Gastrocnemius medialis (tissue), 4 donors: ENCODE measurements at regions of chr13 and their contacts with region 1.

Region 1: DNA sequence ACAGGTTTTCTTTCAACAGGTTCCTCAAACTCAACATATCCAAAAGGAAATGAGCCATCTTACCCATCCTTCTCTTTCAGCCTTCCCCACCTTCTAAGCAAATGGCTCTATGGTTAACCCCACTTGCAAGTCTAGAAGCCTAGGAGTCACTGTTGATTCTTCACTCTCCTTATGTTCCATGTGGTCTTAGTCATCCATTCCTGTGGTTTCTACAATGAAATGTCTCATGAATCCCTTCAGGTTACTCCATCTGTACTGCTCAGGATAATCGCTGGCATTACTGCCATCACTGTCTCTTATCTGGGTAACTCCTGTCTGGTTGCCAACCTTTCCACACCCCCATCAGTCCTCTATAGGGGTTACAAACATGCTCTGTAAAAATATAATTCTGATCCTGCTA is 381.3 kb downstream of the ENOX1 start:
- DNase-seq: no peak
- ATAC-seq: peak in 1 of 2 donors; percentile 27
- H3K4me3 ChIP-seq: no peak overlapping the region
- H3K27ac ChIP-seq: peak overlapping the region; percentile 87 to 92 (median 88)
- H3K4me1 ChIP-seq: peaks cover 23% of the 10 kb centered on the region in 2 donors
- H3K27me3 ChIP-seq: no peaks in the 10 kb centered on the region
- CTCF ChIP-seq: no peak
- POLR2A ChIP-seq: no peak

Region 2: DNA sequence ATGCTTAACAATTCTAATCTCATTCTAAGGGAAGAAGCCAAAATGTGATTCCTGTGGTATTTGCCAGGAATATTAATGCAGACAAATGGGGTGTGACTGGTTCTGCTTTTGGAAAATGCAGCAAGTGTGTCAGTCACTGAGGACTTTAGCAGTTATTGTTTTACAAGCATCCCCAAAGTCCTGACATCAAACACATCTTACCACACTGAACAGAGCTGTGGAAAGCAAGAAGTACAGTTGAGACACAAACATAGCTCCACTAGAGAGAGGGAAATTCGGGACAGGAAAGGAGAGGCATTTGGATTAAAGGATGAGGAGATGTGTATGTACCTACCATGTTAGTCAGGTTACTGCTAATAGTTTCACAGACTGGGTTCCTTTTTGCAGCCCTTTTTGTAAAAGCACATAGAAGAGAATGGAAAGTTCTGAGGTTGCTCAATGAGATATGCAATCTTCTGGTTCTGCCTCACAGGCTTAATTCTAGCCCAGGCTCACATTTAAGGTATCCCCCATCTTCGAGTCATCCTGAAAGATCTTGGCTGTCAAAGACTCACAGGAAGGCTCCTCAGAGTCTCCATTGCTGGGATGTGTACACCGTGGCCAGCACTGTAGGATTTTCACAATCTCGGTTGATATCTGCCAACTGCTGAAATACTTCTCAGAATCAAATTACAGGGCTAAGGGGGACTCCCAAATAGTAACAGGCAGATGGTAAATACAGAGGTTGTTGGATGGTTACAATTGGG is 65.5 kb before region 1 on chr13:
- in situ Hi-C with region 1: no loop called
- intact Hi-C with region 1: loop called (anchors 1 kb)
- DNase-seq: peak; percentile 58 to 67
- ATAC-seq: peak; percentile 85 to 86
- H3K4me3 ChIP-seq: no peak overlapping the region
- H3K27ac ChIP-seq: peak overlapping the region; percentile 73 to 86 (median 84)
- H3K4me1 ChIP-seq: peaks cover 23 to 46% of the 10 kb centered on the region in 2 donors
- H3K27me3 ChIP-seq: no peaks in the 10 kb centered on the region
- CTCF ChIP-seq: no peak
- POLR2A ChIP-seq: no peak

Region 3: GRCh38 chr13:43390619-43391018 is 14.8 kb before region 1 on chr13:
- in situ Hi-C with region 1: no loop called
- intact Hi-C with region 1: loop called (anchors 2 kb)
- DNase-seq: no peak
- ATAC-seq: no peak
- H3K4me3 ChIP-seq: no peak overlapping the region
- H3K27ac ChIP-seq: peak overlapping the region in 3 of 4 donors; percentile 35 to 92 (median 86)
- H3K4me1 ChIP-seq: peaks cover 31 to 50% of the 10 kb centered on the region in 2 donors
- H3K27me3 ChIP-seq: no peaks in the 10 kb centered on the region
- CTCF ChIP-seq: no peak
- POLR2A ChIP-seq: no peak

Region 4: DNA sequence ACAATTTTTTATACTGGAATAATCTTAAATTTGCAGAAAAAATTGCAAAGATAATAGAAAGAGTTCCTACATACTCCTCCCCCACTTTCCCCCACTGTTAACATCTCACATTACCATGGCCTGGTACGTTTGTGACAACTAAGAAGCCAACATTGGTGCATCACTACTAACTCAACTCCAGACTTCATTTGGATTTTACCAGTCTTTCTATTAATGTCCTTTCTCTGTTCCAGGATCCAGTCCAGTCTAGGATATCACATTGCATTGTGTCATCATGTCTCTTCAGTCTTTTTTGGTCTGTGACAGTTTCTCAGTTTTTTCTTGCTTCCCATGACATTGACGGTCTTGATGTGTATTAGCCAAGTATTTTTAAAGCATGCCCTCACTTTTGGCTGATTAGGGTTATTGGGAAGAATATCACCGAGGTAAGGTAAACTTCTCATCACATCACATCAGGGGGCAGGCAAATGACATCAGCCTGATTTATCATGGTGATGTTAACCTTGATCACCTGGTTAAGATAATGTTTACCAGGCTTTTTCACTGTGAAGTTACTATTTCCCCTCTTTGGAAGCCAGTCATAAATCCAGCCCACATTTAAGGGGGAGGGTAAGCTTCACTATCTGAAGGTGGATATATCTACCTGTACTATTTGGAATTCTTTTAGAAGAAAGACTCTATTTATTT is 59.3 kb after region 1 on chr13:
- in situ Hi-C with region 1: no loop called
- intact Hi-C with region 1: loop called (anchors 2 kb)
- DNase-seq: peak; percentile 13 to 19
- ATAC-seq: peak; percentile 100
- H3K4me3 ChIP-seq: no peak overlapping the region
- H3K27ac ChIP-seq: peak overlapping the region; percentile 58 to 78 (median 61)
- H3K4me1 ChIP-seq: peaks cover 12 to 17% of the 10 kb centered on the region in 2 donors
- H3K27me3 ChIP-seq: no peaks in the 10 kb centered on the region
- CTCF ChIP-seq: no peak
- POLR2A ChIP-seq: no peak